ENCODE measurements at regions of chr7 and their contacts with region 1.

Region 1: GRCh38 chr7:144835652-144836544 is at the start of gene TPK1:
- DNase-seq: peak; percentile 96
- ATAC-seq: peak; percentile 99
- total RNA-seq, gene TPK1: 5.0 TPM

Region 2: DNA sequence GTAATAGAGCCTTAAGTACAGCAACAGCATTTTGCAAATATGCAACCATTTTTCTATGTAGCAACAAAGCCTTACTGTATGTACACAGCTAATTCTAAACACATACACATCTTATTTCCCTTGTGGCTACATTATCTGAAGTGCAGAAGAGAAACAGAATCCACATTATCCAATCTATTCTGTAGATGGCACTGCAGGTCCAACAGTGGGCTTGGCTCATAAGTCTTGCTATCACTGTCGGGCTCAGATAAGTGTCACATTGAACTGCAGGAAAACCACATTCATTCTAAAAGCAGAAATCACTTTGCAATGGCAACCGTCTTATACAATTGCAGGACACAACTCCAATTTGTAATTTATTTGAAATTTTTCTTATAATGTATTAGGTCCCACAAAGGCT is 322.6 kb before region 1 on chr7:
- intact Hi-C with region 1: loop called (anchors 10 kb)
- DNase-seq: no peak
- ATAC-seq: no peak

Region 3: GRCh38 chr7:144738708-144739314 is 97.1 kb before region 1 on chr7:
- intact Hi-C with region 1: loop called (anchors 10 kb)
- DNase-seq: no peak
- ATAC-seq: no peak

Region 4: GRCh38 chr7:144761493-144761892 is 74.4 kb before region 1 on chr7:
- intact Hi-C with region 1: no loop called
- DNase-seq: peak; percentile 66
- ATAC-seq: peak; percentile 42

Region 5: DNA sequence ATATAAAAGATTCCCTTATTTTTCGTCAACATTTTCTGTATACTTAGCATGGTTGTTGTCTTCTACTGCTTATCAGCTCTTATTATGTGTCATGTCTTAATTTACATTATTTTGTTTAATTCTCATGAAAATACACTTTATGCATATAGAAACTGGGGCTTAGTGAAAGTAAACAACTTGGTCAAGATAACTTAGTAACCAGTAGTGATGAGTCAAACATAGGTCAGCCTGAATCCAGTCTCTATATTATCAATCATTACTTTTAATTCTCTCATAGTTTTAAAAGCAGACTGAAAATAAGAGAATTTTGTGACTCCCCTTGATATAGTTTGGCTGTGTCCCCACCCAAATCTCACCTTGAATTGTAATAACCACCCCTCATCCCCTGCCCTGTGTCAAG is 119.5 kb after region 1 on chr7:
- intact Hi-C with region 1: no loop called
- DNase-seq: no peak
- ATAC-seq: no peak

Region 6: GRCh38 chr7:145064114-145064513 is 228.2 kb after region 1 on chr7:
- intact Hi-C with region 1: no loop called
- DNase-seq: no peak
- ATAC-seq: no peak

Region 7: GRCh38 chr7:145183066-145183465 is 347.2 kb after region 1 on chr7:
- intact Hi-C with region 1: no loop called
- DNase-seq: no peak
- ATAC-seq: no peak